ENCODE measurements at regions of chr6 and their contacts with region 1.

Region 1: GRCh38 chr6:150403458-150404246 is 34.8 kb downstream of the IYD start:
- DNase-seq: no peak
- ATAC-seq: no peak
- H3K4me3 ChIP-seq: no peak overlapping the region
- H3K4me3 Mint-ChIP-seq: no peak overlapping the region
- H3K27ac ChIP-seq: no peak overlapping the region
- H3K27ac Mint-ChIP-seq: no peak overlapping the region
- H3K4me1 ChIP-seq: no peaks in the 10 kb centered on the region
- H3K4me1 Mint-ChIP-seq: no peaks in the 10 kb centered on the region
- H3K27me3 ChIP-seq: peaks cover 0 to 16% (median 5%) of the 10 kb centered on the region in 4 experiments
- H3K27me3 Mint-ChIP-seq: peaks cover 46% of the 10 kb centered on the region
- CTCF ChIP-seq: no peak

Region 2: GRCh38 chr6:150068720-150069648 is 334.7 kb before region 1 on chr6 and contains the start of gene ULBP3:
- CTCF ChIA-PET with region 1: interaction called, 10 read pairs
- POLR2A ChIA-PET with region 1: no interaction called
- intact Hi-C with region 1: no loop called
- DNase-seq: peak; percentile 80
- ATAC-seq: peak; percentile 90
- H3K4me3 ChIP-seq: peak within 1 kb of the TSS; percentile 11 to 71 (median 70)
- H3K4me3 Mint-ChIP-seq: peak within 1 kb of the TSS; percentile 87
- H3K27ac ChIP-seq: no peak within 1 kb of the TSS
- H3K27ac Mint-ChIP-seq: peak within 1 kb of the TSS; percentile 38
- H3K4me1 ChIP-seq: peaks cover 5 to 18% of the 10 kb centered on the region in 2 donors
- H3K4me1 Mint-ChIP-seq: peaks cover 23% of the 10 kb centered on the region
- H3K27me3 ChIP-seq: peaks cover 0 to 22% (median 4%) of the 10 kb centered on the region in 4 experiments
- H3K27me3 Mint-ChIP-seq: peaks cover 18% of the 10 kb centered on the region
- CTCF ChIP-seq: peak; percentile 50
- total RNA-seq, gene ULBP3: 0.61 and 0.69 TPM in 2 replicates

Region 3: GRCh38 chr6:150547502-150548222 is 144.0 kb after region 1 on chr6:
- CTCF ChIA-PET with region 1: no interaction called
- POLR2A ChIA-PET with region 1: no interaction called
- intact Hi-C with region 1: no loop called
- DNase-seq: no peak
- ATAC-seq: no peak
- H3K4me3 ChIP-seq: no peak overlapping the region
- H3K4me3 Mint-ChIP-seq: no peak overlapping the region
- H3K27ac ChIP-seq: no peak overlapping the region
- H3K27ac Mint-ChIP-seq: no peak overlapping the region
- H3K4me1 ChIP-seq: no peaks in the 10 kb centered on the region
- H3K4me1 Mint-ChIP-seq: no peaks in the 10 kb centered on the region
- H3K27me3 ChIP-seq: peaks cover 0 to 9% (median 0%) of the 10 kb centered on the region in 4 experiments
- H3K27me3 Mint-ChIP-seq: peaks cover 17% of the 10 kb centered on the region
- CTCF ChIP-seq: no peak

Measured in B cell (primary cell).